Panc1 (cell line): ENCODE measurements at regions of chr1 and their contacts with region 1.

Region 1: GRCh38 chr1:52629325-52629643 is 3.7 kb upstream of the SHISAL2A start:
- DNase-seq: no peak
- ATAC-seq: peak; percentile 48
- H3K4me3 ChIP-seq: no peak overlapping the region; a peak in 1 of 4 replicates
- H3K27ac ChIP-seq: no peak overlapping the region
- H3K4me1 ChIP-seq: no peaks in the 10 kb centered on the region
- H3K27me3 ChIP-seq: peaks cover 11% of the 10 kb centered on the region
- CTCF ChIP-seq: no peak

Region 2: GRCh38 chr1:52141513-52142219 is 487.6 kb before region 1 on chr1 and contains the start of gene ZFYVE9:
- CTCF ChIA-PET with region 1: no interaction called
- POLR2A ChIA-PET with region 1: no interaction called
- in situ Hi-C with region 1: no loop called
- intact Hi-C with region 1: no loop called
- DNase-seq: no peak
- ATAC-seq: peak; percentile 94
- H3K4me3 ChIP-seq: peak within 1 kb of the TSS; percentile 75 to 90
- H3K27ac ChIP-seq: peak within 1 kb of the TSS; percentile 78
- H3K4me1 ChIP-seq: peaks cover 25% of the 10 kb centered on the region
- H3K27me3 ChIP-seq: no peaks in the 10 kb centered on the region
- CTCF ChIP-seq: peak; percentile 96
- total RNA-seq, gene ZFYVE9: 18.0 TPM

Region 3: DNA sequence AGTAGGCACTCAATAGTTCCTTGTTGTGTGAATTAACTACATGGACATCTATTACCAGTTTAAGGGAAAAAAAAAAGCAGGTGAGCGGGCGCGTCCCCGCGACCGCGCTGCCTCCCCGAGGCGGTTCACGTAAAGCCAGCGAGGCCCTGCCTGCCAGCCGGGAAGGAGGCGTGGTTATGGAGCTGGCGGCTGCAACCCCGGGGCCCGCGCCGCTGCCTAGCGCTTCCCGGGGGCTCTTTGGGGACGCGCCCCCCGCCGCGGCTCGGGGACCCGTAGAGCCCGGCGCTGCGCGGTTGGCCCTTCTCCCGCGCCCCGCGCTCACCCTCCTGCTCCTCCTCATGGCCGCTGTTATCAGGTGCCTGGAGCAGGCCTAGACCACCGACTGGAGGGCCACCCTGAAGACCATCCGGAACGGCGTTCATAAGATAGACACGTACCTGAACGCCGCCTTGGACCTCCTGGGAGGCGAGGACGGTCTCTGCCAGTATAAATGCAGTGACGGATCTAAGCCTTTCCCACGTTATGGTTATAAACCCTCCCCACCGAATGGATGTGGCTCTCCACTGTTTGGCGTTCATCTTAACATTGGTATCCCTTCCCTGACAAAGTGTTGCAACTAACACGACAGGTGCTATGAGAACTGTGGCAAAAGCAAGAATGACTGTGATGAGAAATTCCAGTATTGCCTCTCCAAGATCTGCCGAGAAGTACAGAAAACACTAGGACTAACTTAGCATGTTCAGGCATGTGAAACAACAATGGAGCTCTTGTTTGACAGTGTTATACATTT is 260.7 kb before region 1 on chr1:
- CTCF ChIA-PET with region 1: no interaction called
- POLR2A ChIA-PET with region 1: interaction called, 14 read pairs
- in situ Hi-C with region 1: no loop called
- intact Hi-C with region 1: no loop called
- DNase-seq: no peak
- ATAC-seq: peak; percentile 41
- H3K4me3 ChIP-seq: peak overlapping the region; percentile 51 to 57
- H3K27ac ChIP-seq: peak overlapping the region; percentile 17
- H3K4me1 ChIP-seq: peaks cover 18% of the 10 kb centered on the region
- H3K27me3 ChIP-seq: no peaks in the 10 kb centered on the region
- CTCF ChIP-seq: no peak; the same call in 1 of the 2 replicates

Region 4: GRCh38 chr1:52400131-52400530 is 229.2 kb before region 1 on chr1:
- CTCF ChIA-PET with region 1: no interaction called
- POLR2A ChIA-PET with region 1: no interaction called
- in situ Hi-C with region 1: no loop called
- intact Hi-C with region 1: no loop called
- DNase-seq: no peak
- ATAC-seq: no peak
- H3K4me3 ChIP-seq: no peak overlapping the region
- H3K27ac ChIP-seq: no peak overlapping the region
- H3K4me1 ChIP-seq: peaks cover 7% of the 10 kb centered on the region; the same call in 1 of the 2 replicates
- H3K27me3 ChIP-seq: no peaks in the 10 kb centered on the region
- CTCF ChIP-seq: no peak; the same call in 1 of the 2 replicates

Region 5: DNA sequence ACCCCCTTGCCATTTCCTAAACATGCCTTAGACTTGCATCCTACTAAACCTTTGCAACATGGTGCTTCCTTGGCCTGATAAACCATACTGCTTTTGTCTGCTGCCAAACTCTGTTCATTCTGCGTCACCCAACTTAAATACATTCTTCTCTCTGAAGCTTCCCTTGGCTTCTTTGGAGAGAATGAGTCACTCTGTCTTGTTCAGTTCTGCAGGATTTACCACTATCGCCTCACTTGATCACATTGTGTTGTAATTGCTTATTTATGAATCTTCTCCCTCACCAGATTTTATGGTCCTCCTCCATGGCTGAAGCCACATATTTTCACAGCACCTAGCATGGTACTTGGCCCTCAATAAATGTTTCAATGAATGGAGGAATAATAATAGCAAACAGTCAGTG is 54.7 kb before region 1 on chr1:
- CTCF ChIA-PET with region 1: interaction called, 11 read pairs
- POLR2A ChIA-PET with region 1: no interaction called
- in situ Hi-C with region 1: no loop called
- intact Hi-C with region 1: no loop called
- DNase-seq: no peak
- ATAC-seq: peak; percentile 70; the same call in 1 of the 2 replicates
- H3K4me3 ChIP-seq: no peak overlapping the region
- H3K27ac ChIP-seq: no peak overlapping the region
- H3K4me1 ChIP-seq: no peaks in the 10 kb centered on the region
- H3K27me3 ChIP-seq: no peaks in the 10 kb centered on the region
- CTCF ChIP-seq: no peak

Region 6: GRCh38 chr1:52867087-52867863 is 238.0 kb after region 1 on chr1:
- CTCF ChIA-PET with region 1: no interaction called
- POLR2A ChIA-PET with region 1: no interaction called
- in situ Hi-C with region 1: no loop called
- intact Hi-C with region 1: no loop called
- DNase-seq: no peak
- ATAC-seq: no peak
- H3K4me3 ChIP-seq: no peak overlapping the region
- H3K27ac ChIP-seq: no peak overlapping the region
- H3K4me1 ChIP-seq: no peaks in the 10 kb centered on the region
- H3K27me3 ChIP-seq: no peaks in the 10 kb centered on the region
- CTCF ChIP-seq: no peak